ENCODE measurements at regions of chr12 and their contacts with region 1.

Region 1: GRCh38 chr12:57101844-57102695 is 9.1 kb downstream of the STAT6 start:
- DNase-seq: peak; percentile 66 to 74
- ATAC-seq: peak; percentile 58 to 65
- H3K4me3 ChIP-seq: no peak overlapping the region
- H3K27ac ChIP-seq: peak overlapping the region; percentile 13 to 68; a peak in 4 of 6 replicates
- H3K4me1 ChIP-seq: peaks cover 19% of the 10 kb centered on the region
- CTCF ChIP-seq: no peak
- EP300 ChIP-seq: no peak
- POLR2A ChIP-seq: no peak
- RAD21 ChIP-seq: no peak

Region 2: GRCh38 chr12:57088459-57089248 is 13.4 kb before region 1 on chr12 and contains the start of gene NAB2:
- CTCF ChIA-PET with region 1: interaction called, 440 read pairs
- POLR2A ChIA-PET with region 1: interaction called, 14 read pairs
- DNase-seq: peak; percentile 89 to 97
- ATAC-seq: peak; percentile 48 to 71
- H3K4me3 ChIP-seq: peak within 1 kb of the TSS; percentile 89
- H3K27ac ChIP-seq: peak within 1 kb of the TSS; percentile 96 to 100
- H3K4me1 ChIP-seq: peaks cover 19% of the 10 kb centered on the region
- CTCF ChIP-seq: no peak
- EP300 ChIP-seq: no peak
- POLR2A ChIP-seq: peak; percentile 67
- RAD21 ChIP-seq: no peak
- polyA plus RNA-seq, gene NAB2: 8.6 and 10.1 TPM in 2 replicates

Region 3: DNA sequence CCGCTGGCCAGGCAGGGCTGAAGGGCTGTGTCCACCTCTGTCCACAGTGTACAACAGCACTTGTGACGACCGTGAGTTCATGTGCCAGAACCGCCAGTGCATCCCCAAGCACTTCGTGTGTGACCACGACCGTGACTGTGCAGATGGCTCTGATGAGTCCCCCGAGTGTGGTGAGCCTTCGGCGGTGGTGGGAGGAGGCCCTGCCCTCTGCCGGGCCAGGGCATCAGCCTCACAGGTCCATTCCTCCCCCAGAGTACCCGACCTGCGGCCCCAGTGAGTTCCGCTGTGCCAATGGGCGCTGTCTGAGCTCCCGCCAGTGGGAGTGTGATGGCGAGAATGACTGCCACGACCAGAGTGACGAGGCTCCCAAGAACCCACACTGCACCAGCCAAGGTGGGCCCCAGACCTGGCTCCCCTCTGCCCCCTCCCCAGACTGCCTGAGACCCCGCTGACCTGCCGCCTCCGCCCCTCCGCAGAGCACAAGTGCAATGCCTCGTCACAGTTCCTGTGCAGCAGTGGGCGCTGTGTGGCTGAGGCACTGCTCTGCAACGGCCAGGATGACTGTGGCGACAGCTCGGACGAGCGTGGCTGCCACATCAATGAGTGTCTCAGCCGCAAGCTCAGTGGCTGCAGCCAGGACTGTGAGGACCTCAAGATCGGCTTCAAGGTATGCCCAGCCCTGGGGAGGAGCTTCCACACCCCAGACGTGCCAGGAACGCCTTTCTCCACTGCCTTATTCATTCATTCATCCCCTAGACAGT is 93.7 kb after region 1 on chr12:
- CTCF ChIA-PET with region 1: no interaction called
- POLR2A ChIA-PET with region 1: no interaction called
- DNase-seq: no peak
- ATAC-seq: peak in 1 of 2 experiments; percentile 7; a peak in 3 of 6 replicates
- H3K4me3 ChIP-seq: no peak overlapping the region
- H3K27ac ChIP-seq: no peak overlapping the region
- H3K4me1 ChIP-seq: no peaks in the 10 kb centered on the region
- CTCF ChIP-seq: no peak
- EP300 ChIP-seq: no peak
- POLR2A ChIP-seq: no peak; the same call in 1 of the 2 replicates
- RAD21 ChIP-seq: no peak

Region 4: DNA sequence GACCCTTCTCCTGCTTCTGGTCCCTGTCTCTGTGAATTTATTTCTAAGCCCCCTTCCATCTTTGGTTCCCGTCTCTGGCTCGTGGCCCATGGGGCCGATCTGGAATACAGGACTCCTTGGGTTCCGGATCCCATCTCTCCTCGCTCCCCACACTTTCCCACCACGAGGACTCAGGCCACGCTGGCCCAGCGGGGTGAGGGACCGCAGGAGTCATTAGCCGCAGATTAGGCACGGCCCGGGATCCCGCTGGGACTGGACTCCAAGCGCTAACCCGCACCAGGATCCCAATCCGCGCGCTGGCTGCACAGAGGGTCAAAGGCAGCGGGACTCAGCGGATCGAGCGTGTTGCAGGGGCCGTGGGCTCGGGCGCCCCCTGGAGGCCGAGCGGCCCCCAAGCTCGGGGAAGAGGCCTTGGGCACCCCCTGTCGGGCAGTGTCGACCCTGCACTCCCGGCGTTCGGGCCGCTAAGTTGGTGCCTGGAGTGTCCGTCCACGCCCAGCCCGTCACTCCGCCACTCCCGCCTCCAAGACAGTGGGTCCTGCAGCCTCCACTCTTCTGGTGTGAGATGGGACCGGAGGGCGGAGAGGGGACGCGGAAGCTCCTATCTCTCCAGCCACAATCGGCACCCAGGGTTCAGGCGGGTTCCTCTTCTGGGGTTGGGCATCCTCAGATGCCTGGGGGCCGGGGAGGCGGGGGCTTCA is 136.9 kb after region 1 on chr12:
- CTCF ChIA-PET with region 1: no interaction called
- POLR2A ChIA-PET with region 1: no interaction called
- DNase-seq: peak; percentile 88 to 92
- ATAC-seq: peak; percentile 49 to 73
- H3K4me3 ChIP-seq: peak overlapping the region; percentile 55
- H3K27ac ChIP-seq: peak overlapping the region; percentile 75 to 93
- H3K4me1 ChIP-seq: peaks cover 26% of the 10 kb centered on the region; the same call in 2 of the 3 replicates
- CTCF ChIP-seq: peak; percentile 100
- EP300 ChIP-seq: no peak
- POLR2A ChIP-seq: no peak
- RAD21 ChIP-seq: peak; percentile 79 to 88

Region 5: DNA sequence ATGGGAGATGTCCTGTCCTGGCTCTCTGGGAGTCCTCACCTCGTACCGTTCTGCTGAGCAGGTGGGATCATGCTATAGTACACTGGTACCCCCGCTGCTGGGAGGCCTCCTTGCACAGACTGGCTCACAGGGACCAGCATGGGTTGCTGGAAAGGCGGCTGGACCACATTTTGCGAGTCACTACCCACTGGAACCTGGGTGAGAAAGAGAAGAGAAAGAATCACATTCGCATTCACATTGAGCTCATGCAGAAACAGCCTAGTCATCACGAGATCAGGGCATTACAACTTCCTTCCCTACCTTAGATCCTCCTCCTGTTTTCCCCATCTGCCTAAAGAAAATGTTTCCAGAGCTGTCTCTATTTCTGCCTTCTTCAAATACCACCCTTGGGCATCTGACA is 166.2 kb after region 1 on chr12:
- CTCF ChIA-PET with region 1: no interaction called
- POLR2A ChIA-PET with region 1: no interaction called
- DNase-seq: peak in 1 of 2 experiments; percentile 19
- ATAC-seq: no peak
- H3K4me3 ChIP-seq: no peak overlapping the region
- H3K27ac ChIP-seq: peak overlapping the region in 1 of 2 experiments; percentile 44; a peak in 2 of 6 replicates
- H3K4me1 ChIP-seq: no peaks in the 10 kb centered on the region
- CTCF ChIP-seq: no peak
- EP300 ChIP-seq: no peak
- POLR2A ChIP-seq: no peak
- RAD21 ChIP-seq: no peak